PC-3 (cell line): ENCODE measurements at regions of chr6 and their contacts with region 1.

Region 1: DNA sequence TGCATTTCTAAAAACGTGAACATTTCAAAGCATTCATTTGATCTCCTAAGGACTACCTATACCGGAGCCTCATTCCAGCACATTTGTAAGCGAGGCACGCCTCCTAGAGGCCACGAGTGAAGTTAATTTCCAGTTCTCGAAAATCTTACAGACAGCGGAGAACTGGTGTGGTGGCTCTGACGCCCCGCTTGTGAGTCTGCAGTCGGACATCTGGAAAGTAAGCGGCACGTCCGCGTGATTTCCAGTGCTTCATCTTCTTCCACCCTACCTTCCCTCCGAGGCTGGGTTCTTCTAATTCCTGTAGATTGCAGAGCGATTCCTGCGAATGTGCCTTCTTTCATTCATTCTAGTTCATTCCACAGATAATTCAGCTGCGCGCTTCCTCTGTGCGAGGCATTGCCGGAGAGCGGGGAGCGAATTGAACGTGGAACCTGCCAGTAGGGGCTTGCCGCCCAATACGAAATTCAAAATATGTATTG is 810 bp upstream of the PRIM2 start:
- DNase-seq: peak; percentile 96
- ATAC-seq: peak; percentile 65
- H3K4me3 ChIP-seq: peak overlapping the region; percentile 95
- H3K27ac ChIP-seq: peak overlapping the region; percentile 43
- H3K4me1 ChIP-seq: peaks cover 52% of the 10 kb centered on the region
- H3K27me3 ChIP-seq: no peaks in the 10 kb centered on the region
- CTCF ChIP-seq: peak; percentile 92

Region 2: DNA sequence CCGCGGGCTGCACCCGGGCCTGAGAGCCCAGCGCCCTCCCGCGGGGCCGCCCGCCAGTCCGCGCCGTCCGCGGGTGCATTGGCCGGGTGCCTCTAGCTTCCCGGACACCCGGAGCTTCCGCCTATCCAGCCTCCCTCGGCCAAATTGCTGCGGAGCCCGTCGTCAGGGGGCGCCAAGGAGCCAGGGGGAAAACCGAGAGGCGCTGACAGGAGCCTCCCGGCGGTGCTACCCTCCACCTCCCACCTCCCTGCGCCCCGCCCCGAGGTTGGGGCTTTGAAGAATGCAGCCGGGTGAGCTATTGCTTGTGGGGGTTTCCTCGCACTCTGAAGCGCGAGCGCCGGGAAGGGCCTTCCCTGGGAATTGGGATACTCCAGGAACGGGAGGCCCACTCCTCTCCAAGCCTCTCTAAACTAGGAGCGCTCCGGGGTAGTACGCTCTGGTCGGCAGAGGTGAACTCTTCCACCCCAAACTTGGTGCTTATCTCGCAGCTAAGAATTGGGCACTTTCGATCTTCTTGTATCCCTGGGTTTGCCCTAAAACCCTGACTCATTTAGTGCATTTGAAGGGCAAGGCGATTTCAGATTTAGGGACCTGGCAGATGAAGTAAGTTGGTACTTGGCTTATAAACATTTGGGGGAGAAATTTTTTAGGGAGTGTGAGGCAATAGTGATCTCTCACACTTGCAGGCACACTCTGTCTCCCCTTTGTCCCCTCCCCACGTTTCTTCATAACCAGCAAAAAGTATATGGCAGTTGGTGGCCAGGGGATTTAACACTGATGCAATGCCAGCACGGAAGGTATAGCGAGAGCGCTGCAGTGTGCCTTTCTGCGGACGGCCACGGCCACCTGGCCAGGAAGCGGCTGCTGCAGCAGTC is 361.2 kb before region 1 on chr6:
- CTCF ChIA-PET with region 1: interaction called, 6 read pairs
- POLR2A ChIA-PET with region 1: no interaction called
- intact Hi-C with region 1: loop called (anchors 5 kb)
- DNase-seq: peak; percentile 96
- ATAC-seq: peak; percentile 72
- H3K4me3 ChIP-seq: peak overlapping the region; percentile 77
- H3K27ac ChIP-seq: peak overlapping the region; percentile 31
- H3K4me1 ChIP-seq: peaks cover 58% of the 10 kb centered on the region
- H3K27me3 ChIP-seq: no peaks in the 10 kb centered on the region
- CTCF ChIP-seq: peak; percentile 83

Region 3: DNA sequence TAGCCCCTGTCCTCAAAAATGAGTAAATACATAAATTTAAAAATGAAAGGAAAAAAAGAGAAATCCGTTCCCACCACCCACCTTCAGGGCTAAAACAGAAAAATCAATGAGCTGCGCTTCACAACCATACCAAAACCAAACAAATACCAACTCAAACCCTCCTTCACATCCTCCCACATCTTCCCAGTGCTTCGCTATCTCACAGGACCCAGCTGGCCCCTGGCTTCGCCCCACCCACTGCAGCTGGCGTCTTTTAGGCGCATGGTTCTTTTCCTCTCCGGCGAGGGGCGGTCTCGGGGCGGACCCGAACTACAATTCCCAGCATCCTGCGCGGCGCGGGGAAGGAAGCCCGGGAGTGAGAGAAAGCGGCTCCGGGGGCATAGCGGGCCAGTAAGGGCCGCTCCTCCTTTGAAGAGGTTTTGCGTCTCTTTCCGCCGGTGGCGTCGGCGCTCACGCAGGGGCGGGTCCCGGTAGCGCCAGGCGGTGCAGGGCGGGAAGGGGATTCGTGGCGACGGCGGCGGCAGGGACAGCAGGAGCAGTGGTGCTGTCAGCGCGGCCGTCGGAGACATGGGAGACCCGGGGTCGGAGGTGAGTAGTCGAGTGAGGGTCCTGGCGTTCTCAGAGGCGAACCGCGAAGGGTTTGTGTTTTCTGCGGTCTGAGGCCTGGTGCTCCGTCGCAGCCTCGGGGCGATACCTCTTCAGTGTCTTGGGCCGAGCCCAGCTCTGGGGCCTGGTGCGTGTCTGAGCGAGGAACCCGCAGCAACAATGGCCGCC is 226.7 kb before region 1 on chr6 and contains the start of gene ZNF451:
- CTCF ChIA-PET with region 1: interaction called, 3 read pairs
- POLR2A ChIA-PET with region 1: no interaction called
- intact Hi-C with region 1: loop called (anchors 5 kb)
- DNase-seq: peak; percentile 97
- ATAC-seq: peak; percentile 93
- H3K4me3 ChIP-seq: peak within 1 kb of the TSS; percentile 72
- H3K27ac ChIP-seq: no peak within 1 kb of the TSS
- H3K4me1 ChIP-seq: peaks cover 29% of the 10 kb centered on the region
- H3K27me3 ChIP-seq: no peaks in the 10 kb centered on the region
- CTCF ChIP-seq: no peak
- total RNA-seq, gene ZNF451: 32.5 and 34.5 TPM in 2 replicates

Region 4: GRCh38 chr6:57190140-57190539 is 126.5 kb before region 1 on chr6:
- CTCF ChIA-PET with region 1: interaction called, 8 read pairs
- POLR2A ChIA-PET with region 1: no interaction called
- intact Hi-C with region 1: loop called (anchors 1 kb)
- DNase-seq: peak; percentile 45
- ATAC-seq: peak; percentile 70
- H3K4me3 ChIP-seq: no peak overlapping the region
- H3K27ac ChIP-seq: no peak overlapping the region
- H3K4me1 ChIP-seq: no peaks in the 10 kb centered on the region
- H3K27me3 ChIP-seq: no peaks in the 10 kb centered on the region
- CTCF ChIP-seq: peak; percentile 64

Region 5: DNA sequence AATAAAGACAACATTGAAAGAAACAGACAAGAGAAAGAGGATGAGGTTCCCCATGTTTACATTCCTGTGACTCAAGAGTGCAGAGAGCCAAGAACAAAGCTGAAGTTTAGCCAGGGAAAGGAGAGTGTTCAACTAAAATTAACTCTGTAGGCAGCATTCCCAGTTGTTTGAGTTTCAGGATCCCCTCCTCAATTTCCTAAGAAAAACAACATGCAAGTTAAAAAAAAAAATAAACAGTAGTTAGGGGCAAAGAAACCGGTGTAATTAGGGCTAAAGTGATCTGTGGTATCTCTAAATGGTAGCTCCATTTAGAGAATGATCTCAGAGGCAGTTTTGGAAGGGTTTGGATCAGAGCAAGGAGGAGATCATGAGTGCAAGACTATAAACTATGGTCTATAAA is 63.6 kb before region 1 on chr6:
- CTCF ChIA-PET with region 1: no interaction called
- POLR2A ChIA-PET with region 1: no interaction called
- intact Hi-C with region 1: no loop called
- DNase-seq: peak; percentile 52
- ATAC-seq: peak; percentile 90
- H3K4me3 ChIP-seq: no peak overlapping the region
- H3K27ac ChIP-seq: no peak overlapping the region
- H3K4me1 ChIP-seq: peaks cover 8% of the 10 kb centered on the region
- H3K27me3 ChIP-seq: no peaks in the 10 kb centered on the region
- CTCF ChIP-seq: no peak

Region 6: GRCh38 chr6:57267586-57268293 is 48.9 kb before region 1 on chr6:
- CTCF ChIA-PET with region 1: interaction called, 13 read pairs
- POLR2A ChIA-PET with region 1: no interaction called
- intact Hi-C with region 1: loop called (anchors 1 kb)
- DNase-seq: peak; percentile 97
- ATAC-seq: peak; percentile 96
- H3K4me3 ChIP-seq: no peak overlapping the region
- H3K27ac ChIP-seq: peak overlapping the region; percentile 70
- H3K4me1 ChIP-seq: peaks cover 40% of the 10 kb centered on the region
- H3K27me3 ChIP-seq: no peaks in the 10 kb centered on the region
- CTCF ChIP-seq: peak; percentile 90